ENCODE measurements at regions of chr15 and their contacts with region 1.

Region 1: DNA sequence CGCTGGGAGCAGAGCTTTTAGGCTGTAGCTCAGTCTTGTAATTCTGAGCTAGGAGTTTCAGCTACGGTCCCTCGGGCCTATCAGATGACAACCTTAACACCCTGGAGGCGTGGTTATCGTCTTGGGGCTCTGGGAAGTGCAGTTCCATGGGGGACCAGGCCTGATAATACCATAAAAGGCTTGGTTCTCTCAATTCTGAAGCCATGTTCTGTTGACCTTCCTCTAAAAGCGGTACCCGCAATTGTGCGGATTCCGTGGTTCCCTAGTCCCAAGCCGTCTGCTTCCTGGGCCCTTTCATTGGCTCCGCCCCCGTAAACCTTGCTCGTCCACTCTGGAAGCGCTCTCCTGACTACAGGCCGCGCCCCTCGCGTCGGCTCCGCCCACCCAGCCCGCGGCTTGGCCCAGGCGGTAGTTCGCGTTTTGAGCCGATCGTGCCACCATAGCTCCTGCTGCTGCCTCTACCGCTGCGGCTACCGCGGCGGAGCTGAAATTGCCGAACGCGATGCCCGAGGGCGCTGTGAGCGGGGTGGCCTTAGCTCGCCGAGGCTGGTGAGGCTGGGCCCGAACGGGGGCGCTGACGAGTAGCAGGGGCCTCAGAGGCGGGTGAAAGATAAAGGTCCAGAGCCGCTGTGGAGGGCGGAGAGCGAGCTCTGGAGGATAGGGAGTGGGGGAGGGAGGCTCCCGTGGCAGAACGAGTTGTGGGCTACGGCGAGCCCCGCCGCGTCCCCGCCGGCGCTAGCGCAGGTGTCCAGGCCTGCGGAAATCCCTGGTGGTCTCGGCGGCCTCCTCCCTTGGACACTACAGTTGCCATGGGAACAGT is at the start of gene MAPKBP1:
- DNase-seq: peak; percentile 86 to 98
- H3K4me3 ChIP-seq: peak within 1 kb of the TSS; percentile 80
- H3K27ac ChIP-seq: peak within 1 kb of the TSS; percentile 64
- H3K4me1 ChIP-seq: peaks cover 24% of the 10 kb centered on the region
- H3K27me3 ChIP-seq: no peaks in the 10 kb centered on the region
- CTCF ChIP-seq: peak; percentile 63
- total RNA-seq, gene MAPKBP1: 17.6 and 22.9 TPM in 2 replicates

Region 2: DNA sequence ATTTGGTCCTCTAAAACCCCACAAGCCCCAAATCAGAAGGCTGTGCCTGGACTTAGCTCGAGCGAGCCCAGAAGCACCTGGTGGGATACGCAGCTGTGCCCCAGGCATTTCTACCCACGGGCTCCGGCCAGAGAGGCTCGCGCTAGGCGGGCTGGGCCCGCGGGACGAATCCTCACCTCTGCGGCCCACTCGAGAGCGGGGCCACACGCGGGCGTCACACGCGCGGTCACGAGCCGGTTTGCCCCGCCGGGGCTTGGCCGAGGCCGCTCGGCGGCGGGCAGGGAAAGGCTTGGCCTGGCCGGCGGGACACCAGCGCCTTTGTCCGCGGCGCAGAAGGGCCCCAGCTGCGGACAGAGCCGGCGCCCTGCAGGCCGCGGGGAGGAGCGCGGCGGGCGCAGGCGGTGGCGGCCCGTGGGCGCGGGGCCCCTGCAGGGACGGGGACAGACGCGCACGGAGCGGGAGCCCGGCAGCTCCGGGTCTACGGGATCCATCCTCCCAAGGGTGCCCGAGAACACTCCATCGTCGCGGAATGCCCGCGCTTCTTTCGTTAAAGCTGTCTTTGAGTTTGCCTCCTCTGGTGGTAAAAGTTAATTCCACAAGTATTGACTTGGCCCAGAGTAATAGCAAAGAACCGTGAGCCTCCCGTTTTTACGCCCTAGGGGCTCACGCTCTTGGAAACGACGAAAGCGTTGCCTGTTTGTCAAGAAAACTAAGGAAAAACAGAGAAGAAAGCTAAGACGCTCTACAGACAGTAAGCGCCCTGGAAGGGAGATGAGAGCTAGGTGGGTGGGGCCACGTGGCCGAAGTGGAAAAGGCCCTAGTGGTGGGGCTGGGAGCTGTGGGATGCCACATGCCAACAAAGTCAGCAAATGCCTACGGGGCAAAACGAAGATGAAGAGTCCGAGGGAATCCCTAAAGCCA is 188.9 kb before region 1 on chr15:
- CTCF ChIA-PET with region 1: no interaction called
- POLR2A ChIA-PET with region 1: no interaction called
- intact Hi-C with region 1: loop called (anchors 1 kb)
- DNase-seq: peak; percentile 57 to 64
- H3K4me3 ChIP-seq: peak overlapping the region; percentile 38; the same call in 1 of the 2 replicates
- H3K27ac ChIP-seq: 0 out of 2 replicates have a peak overlapping the region, but pooled peaks have one; percentile 23
- H3K4me1 ChIP-seq: peaks cover 22% of the 10 kb centered on the region
- H3K27me3 ChIP-seq: no peaks in the 10 kb centered on the region
- CTCF ChIP-seq: no peak

Region 3: GRCh38 chr15:41811432-41812195 is 37.3 kb after region 1 on chr15:
- CTCF ChIA-PET with region 1: interaction called, 21 read pairs
- POLR2A ChIA-PET with region 1: no interaction called
- intact Hi-C with region 1: loop called (anchors 1 kb)
- DNase-seq: peak; percentile 52 to 73
- H3K4me3 ChIP-seq: no peak overlapping the region
- H3K27ac ChIP-seq: no peak overlapping the region
- H3K4me1 ChIP-seq: no peaks in the 10 kb centered on the region
- H3K27me3 ChIP-seq: no peaks in the 10 kb centered on the region
- CTCF ChIP-seq: peak; percentile 78

Region 4: DNA sequence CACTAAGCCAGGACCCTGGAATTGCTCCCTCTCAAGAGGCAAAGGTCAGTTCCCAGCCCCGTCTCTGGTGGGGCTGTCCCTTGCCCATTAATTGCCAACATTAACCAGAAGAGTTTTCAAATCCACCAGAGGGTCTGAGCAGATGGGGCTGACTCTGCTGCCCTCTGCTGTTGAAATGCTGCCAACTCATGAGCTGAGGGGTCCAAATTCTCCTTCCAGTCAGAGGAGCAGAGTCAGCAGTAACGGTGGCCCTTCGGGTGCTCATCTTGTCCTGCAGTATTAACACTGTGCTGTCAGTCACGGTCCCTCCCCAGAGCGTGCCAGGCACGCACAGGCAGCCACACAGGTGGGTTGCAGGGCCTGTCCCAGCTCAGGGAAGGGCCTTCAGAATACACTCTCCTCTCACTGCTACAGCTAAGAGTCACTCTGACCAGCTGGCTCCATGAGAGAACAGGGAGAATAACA is 130.3 kb after region 1 on chr15:
- CTCF ChIA-PET with region 1: interaction called, 16 read pairs
- POLR2A ChIA-PET with region 1: no interaction called
- intact Hi-C with region 1: loop called (anchors 1 kb)
- DNase-seq: peak in 1 of 2 experiments; percentile 68
- H3K4me3 ChIP-seq: no peak overlapping the region
- H3K27ac ChIP-seq: no peak overlapping the region
- H3K4me1 ChIP-seq: no peaks in the 10 kb centered on the region
- H3K27me3 ChIP-seq: no peaks in the 10 kb centered on the region
- CTCF ChIP-seq: peak; percentile 80

Region 5: DNA sequence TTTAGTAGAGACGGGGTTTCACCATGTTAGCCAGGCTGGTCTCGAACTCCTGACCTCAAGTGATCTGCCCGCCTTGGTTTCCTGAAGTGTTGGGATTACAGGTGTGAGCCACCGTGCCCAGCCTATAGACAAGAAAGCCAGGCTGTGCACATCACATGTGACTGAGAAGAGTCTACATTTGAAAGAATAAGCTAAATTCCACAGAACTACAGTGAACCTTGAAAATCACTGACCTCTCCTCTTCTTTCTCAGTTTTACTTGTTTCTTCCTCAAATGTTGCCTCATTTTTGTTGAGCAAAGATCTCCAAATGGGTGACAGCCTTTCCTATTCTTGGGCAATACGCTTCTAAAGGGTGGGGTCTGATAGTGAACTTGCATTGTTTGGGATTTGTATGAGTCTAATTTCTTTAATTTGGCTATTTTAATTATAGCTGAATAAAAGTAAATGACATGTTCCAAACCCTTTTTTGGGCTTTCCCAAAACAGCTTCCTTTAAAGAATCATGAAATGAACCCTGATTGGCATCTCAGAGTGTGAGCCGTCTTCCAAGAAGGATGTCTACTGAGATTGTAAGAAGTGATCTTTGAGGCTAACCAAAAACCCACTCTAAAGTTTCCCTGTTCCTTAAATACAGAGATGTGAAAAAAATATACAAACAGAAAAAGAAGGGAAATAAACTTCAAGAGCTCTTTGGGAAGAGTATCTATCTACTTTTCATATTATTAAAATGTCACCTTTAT is 141.2 kb after region 1 on chr15:
- CTCF ChIA-PET with region 1: no interaction called
- POLR2A ChIA-PET with region 1: no interaction called
- intact Hi-C with region 1: no loop called
- DNase-seq: no peak
- H3K4me3 ChIP-seq: no peak overlapping the region
- H3K27ac ChIP-seq: no peak overlapping the region
- H3K4me1 ChIP-seq: peaks cover 10% of the 10 kb centered on the region; the same call in 1 of the 2 replicates
- H3K27me3 ChIP-seq: no peaks in the 10 kb centered on the region
- CTCF ChIP-seq: no peak

Region 6: GRCh38 chr15:42056934-42057779 is 282.9 kb after region 1 on chr15:
- CTCF ChIA-PET with region 1: no interaction called
- POLR2A ChIA-PET with region 1: no interaction called
- intact Hi-C with region 1: loop called (anchors 2 kb)
- DNase-seq: peak; percentile 85 to 96
- H3K4me3 ChIP-seq: peak overlapping the region; percentile 58; the same call in 1 of the 2 replicates
- H3K27ac ChIP-seq: peak overlapping the region; percentile 86
- H3K4me1 ChIP-seq: peaks cover 13% of the 10 kb centered on the region
- H3K27me3 ChIP-seq: no peaks in the 10 kb centered on the region
- CTCF ChIP-seq: peak; percentile 61; the same call in 1 of the 2 replicates

Measured in PC-9 (cell line).